ENCODE measurements at regions of chr3 and their contacts with region 1.

Region 1: GRCh38 chr3:88343259-88343658 is 193.5 kb downstream of the C3orf38 start:
- DNase-seq: no peak
- ATAC-seq: no peak
- H3K4me3 ChIP-seq: no peak overlapping the region
- H3K4me3 Mint-ChIP-seq: no peak overlapping the region
- H3K27ac ChIP-seq: no peak overlapping the region
- H3K27ac Mint-ChIP-seq: no peak overlapping the region
- H3K4me1 ChIP-seq: no peaks in the 10 kb centered on the region
- H3K4me1 Mint-ChIP-seq: no peaks in the 10 kb centered on the region
- H3K27me3 ChIP-seq: no peaks in the 10 kb centered on the region
- H3K27me3 Mint-ChIP-seq: no peaks in the 10 kb centered on the region
- CTCF ChIP-seq: no peak

Region 2: GRCh38 chr3:88101142-88101541 is 242.1 kb before region 1 on chr3:
- CTCF ChIA-PET with region 1: no interaction called
- POLR2A ChIA-PET with region 1: no interaction called
- intact Hi-C with region 1: no loop called
- DNase-seq: no peak
- ATAC-seq: no peak
- H3K4me3 ChIP-seq: no peak overlapping the region
- H3K4me3 Mint-ChIP-seq: no peak overlapping the region
- H3K27ac ChIP-seq: no peak overlapping the region
- H3K27ac Mint-ChIP-seq: no peak overlapping the region
- H3K4me1 ChIP-seq: no peaks in the 10 kb centered on the region
- H3K4me1 Mint-ChIP-seq: peaks cover 21% of the 10 kb centered on the region
- H3K27me3 ChIP-seq: no peaks in the 10 kb centered on the region
- H3K27me3 Mint-ChIP-seq: no peaks in the 10 kb centered on the region
- CTCF ChIP-seq: no peak

Region 3: DNA sequence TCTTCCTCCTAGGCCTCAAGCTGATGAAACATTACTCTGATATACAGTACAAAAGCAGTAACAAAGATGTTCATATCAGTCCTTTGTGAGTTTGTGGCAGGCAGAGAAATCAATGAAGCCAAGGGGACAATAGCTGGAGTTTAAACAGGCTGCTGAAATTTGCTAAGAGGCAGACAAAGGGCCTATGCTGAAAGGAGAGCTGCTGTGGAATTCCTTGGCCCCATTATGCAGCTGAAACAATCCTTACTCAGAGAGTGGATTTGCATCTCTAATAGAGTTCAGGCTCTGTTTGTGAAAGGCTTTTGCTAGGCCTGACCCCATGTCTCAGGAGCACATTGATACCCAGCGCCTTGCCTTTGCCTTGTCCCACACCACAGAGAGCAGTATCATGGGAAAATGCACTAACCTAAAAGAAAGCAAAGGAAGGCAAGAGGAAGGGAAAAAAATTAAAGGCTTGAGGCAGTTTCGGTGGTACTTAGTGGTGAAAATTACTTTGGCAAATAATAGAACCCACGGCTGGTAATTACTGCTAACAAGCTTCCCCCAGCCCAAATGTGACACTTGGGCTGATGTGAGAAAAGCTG is 569.1 kb after region 1 on chr3:
- CTCF ChIA-PET with region 1: no interaction called
- POLR2A ChIA-PET with region 1: no interaction called
- intact Hi-C with region 1: loop called in 1 of 2 experiments (anchors 5 kb)
- DNase-seq: no peak
- ATAC-seq: no peak
- H3K4me3 ChIP-seq: no peak overlapping the region
- H3K4me3 Mint-ChIP-seq: no peak overlapping the region
- H3K27ac ChIP-seq: no peak overlapping the region
- H3K27ac Mint-ChIP-seq: no peak overlapping the region
- H3K4me1 ChIP-seq: no peaks in the 10 kb centered on the region
- H3K4me1 Mint-ChIP-seq: no peaks in the 10 kb centered on the region
- H3K27me3 ChIP-seq: no peaks in the 10 kb centered on the region
- H3K27me3 Mint-ChIP-seq: no peaks in the 10 kb centered on the region
- CTCF ChIP-seq: no peak

Measured in CD4-positive, alpha-beta T cell (primary cell).